Psoas muscle (tissue), 8 donors: ENCODE measurements at regions of chr1 and their contacts with region 1.

Region 1: DNA sequence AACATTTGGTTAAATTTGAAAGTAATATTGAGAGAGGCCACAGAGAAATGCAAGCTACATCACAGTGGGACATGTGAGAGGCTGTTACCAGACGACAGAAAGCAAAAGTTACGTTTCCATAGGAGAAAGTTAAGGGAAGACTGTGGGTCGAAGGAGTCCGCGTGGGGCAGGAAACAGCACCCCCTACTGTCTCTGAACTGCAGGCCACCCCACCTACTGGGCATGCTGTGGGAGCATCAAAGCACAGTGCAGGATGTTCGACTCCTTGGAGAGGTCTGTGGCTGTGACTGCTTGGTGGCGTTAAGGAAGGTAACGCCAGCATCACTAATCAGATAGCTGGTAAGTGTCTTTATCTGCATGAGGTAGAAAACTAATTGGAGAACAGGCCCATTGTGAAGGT is 123.9 kb downstream of the PTBP2 start:
- DNase-seq: no peak
- ATAC-seq: peak; percentile 42 to 59 (median 58)
- H3K4me3 ChIP-seq: no peak overlapping the region
- H3K27ac ChIP-seq: no peak overlapping the region
- H3K4me1 ChIP-seq: no peaks in the 10 kb centered on the region
- H3K27me3 ChIP-seq: no peaks in the 10 kb centered on the region
- CTCF ChIP-seq: peak; percentile 54

Region 2: GRCh38 chr1:96236156-96236739 is 609.2 kb before region 1 on chr1:
- intact Hi-C with region 1: loop called (anchors 2 to 10 kb)
- DNase-seq: no peak
- ATAC-seq: peak in 1 of 4 donors; percentile 56
- H3K4me3 ChIP-seq: no peak overlapping the region
- H3K27ac ChIP-seq: no peak overlapping the region
- H3K4me1 ChIP-seq: no peaks in the 10 kb centered on the region
- H3K27me3 ChIP-seq: no peaks in the 10 kb centered on the region
- CTCF ChIP-seq: peak; percentile 60

Region 3: DNA sequence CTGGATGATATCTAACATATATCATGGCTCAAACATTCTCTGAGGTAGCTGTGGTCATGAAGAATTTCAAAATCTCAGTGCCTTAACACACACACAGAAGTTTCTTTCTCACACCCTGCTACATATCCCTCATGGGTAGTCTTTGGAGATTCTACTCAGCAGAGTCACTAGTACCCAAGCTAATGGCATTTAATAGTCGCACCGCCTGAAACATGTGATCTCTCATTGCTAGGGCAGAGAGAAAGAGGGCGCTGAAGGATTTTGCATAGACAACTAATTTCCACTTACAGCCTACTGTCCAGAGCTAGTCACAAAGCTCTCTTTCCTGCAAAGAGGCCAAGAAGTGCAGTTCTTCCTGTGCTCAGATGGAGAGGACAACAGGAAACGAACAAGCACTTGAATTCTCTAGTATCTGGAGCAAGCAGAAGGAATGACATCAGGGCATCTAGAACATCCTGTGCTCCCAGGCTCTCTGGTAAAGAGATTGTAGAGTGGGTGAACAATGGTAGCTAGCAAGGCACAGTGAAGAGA is 307.3 kb before region 1 on chr1:
- intact Hi-C with region 1: no loop called
- DNase-seq: no peak
- ATAC-seq: peak; percentile 54 to 90 (median 74)
- H3K4me3 ChIP-seq: no peak overlapping the region
- H3K27ac ChIP-seq: peak overlapping the region; percentile 19
- H3K4me1 ChIP-seq: peaks cover 21% of the 10 kb centered on the region
- H3K27me3 ChIP-seq: no peaks in the 10 kb centered on the region
- CTCF ChIP-seq: no peak